ENCODE measurements at regions of chr13 and their contacts with region 1.

Region 1: DNA sequence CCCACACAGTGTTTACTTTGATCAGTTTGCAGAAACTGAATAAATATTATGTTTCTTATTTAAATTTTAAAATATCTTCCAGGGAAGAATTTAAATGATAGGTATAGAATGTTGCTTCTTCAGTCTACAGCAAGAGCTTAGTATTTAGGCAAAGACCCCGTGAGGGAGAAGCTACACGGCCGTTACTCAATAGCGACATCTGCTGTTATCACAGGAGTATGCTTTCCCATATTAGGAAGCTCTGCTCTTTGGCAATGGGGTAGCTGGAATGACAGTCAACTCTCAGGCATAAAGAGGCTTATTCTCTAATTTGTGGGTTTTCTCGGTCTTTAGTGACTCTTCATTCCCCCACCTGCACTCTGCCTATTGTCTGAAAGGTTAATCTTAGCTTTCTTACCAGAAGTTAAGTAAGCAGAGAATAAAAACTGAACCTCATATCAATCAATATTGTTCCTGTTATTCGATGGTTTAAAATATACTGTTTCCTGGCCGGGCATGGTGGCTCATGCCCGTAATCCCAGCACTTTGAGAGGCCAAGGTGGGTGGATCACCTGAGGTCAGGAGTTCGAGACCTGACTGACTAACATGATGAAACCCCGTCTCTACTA is 13.2 kb upstream of the LHFPL6 start:
- DNase-seq: peak; percentile 31 to 67 (median 46)
- H3K4me3 ChIP-seq: no peak overlapping the region
- H3K27ac ChIP-seq: no peak overlapping the region
- H3K4me1 ChIP-seq: no peaks in the 10 kb centered on the region
- H3K27me3 ChIP-seq: no peaks in the 10 kb centered on the region
- CTCF ChIP-seq: peak; percentile 62 to 89 (median 74)
- POLR2A ChIP-seq: no peak

Region 2: GRCh38 chr13:39051157-39051556 is 565.0 kb before region 1 on chr13:
- intact Hi-C with region 1: loop called in 1 of 2 experiments (anchors 10 kb)
- DNase-seq: no peak
- H3K4me3 ChIP-seq: no peak overlapping the region
- H3K27ac ChIP-seq: no peak overlapping the region
- H3K4me1 ChIP-seq: no peaks in the 10 kb centered on the region
- H3K27me3 ChIP-seq: no peaks in the 10 kb centered on the region
- CTCF ChIP-seq: peak in 5 of 6 experiments; percentile 18 to 54 (median 46)
- POLR2A ChIP-seq: no peak

Region 3: DNA sequence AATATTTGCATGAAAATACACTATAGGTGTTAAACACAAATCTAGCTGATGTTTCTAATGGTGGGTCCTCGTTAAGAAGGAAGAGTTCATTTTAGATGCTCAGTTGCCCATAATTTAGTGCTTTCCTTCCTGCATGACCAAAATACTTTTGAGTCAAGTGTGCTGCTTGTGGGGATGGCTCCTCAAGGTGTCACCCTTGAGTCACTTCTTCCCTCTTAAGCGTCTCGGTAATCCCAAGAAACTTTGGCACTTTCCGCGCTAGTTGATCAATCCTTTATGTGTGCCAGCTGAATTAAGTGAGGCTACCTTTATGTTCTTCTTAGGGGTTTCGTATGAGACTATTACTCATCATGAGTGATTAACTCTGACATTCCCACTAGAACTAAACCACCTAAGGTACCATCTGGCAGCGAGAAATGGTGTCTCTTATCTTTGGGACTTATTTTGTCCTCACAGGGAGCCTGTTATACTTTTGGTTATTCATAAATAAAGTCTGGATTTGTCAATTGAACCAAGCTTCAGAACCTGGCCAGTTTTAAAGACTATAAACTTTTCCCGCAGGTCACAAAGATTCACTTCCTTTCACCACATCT is 471.2 kb before region 1 on chr13:
- intact Hi-C with region 1: loop called (anchors 5 to 10 kb)
- DNase-seq: peak; percentile 45 to 82 (median 62)
- H3K4me3 ChIP-seq: peak overlapping the region in 1 of 4 donors; percentile 40
- H3K27ac ChIP-seq: no peak overlapping the region
- H3K4me1 ChIP-seq: no peaks in the 10 kb centered on the region
- H3K27me3 ChIP-seq: no peaks in the 10 kb centered on the region
- CTCF ChIP-seq: peak; percentile 36 to 76 (median 66)
- POLR2A ChIP-seq: no peak

Region 4: GRCh38 chr13:39415008-39415802 is 201.0 kb before region 1 on chr13:
- intact Hi-C with region 1: loop called in 1 of 2 experiments (anchors 2 kb)
- DNase-seq: peak; percentile 29 to 74 (median 59)
- H3K4me3 ChIP-seq: no peak overlapping the region
- H3K27ac ChIP-seq: peak overlapping the region in 2 of 5 donors; percentile 36 to 57
- H3K4me1 ChIP-seq: peaks cover 0 to 32% of the 10 kb centered on the region in 2 donors
- H3K27me3 ChIP-seq: no peaks in the 10 kb centered on the region
- CTCF ChIP-seq: peak; percentile 19 to 58 (median 50)
- POLR2A ChIP-seq: no peak

Region 5: DNA sequence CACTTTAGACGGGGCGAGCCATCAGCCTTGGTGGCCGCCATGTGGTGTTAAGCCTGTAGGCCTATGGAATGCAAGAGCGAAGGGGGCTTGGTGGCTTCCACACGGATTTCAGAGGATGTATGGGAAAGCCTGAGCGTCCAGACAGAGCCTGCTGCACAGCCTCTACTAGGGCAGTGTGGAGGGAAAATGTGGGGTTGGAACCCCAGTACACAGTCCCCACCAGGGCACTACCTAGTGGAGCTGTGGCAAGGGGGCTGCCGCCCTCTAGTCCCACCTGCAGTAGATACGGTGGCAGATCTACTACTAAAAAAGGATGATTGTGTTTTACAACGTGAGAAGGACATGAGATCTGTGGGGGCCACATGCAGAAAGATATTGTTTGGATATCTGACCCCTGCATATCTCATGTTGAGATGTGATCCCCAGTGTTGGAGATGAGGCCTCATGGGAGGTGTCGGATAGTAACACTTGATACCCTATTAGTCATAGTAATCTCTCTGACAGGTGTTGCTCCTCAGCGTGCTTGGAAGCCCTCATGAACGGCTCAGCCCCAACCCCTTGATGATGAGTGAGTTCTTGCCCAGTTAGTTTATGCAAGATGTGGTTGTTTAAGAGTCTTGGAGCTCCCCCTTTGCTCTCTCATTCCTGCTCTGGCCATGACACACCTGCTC is 58.8 kb before region 1 on chr13:
- intact Hi-C with region 1: no loop called
- DNase-seq: no peak
- H3K4me3 ChIP-seq: no peak overlapping the region
- H3K27ac ChIP-seq: no peak overlapping the region
- H3K4me1 ChIP-seq: no peaks in the 10 kb centered on the region
- H3K27me3 ChIP-seq: no peaks in the 10 kb centered on the region
- CTCF ChIP-seq: no peak
- POLR2A ChIP-seq: no peak